ENCODE measurements at regions of chr11 and their contacts with region 1.

Region 1: DNA sequence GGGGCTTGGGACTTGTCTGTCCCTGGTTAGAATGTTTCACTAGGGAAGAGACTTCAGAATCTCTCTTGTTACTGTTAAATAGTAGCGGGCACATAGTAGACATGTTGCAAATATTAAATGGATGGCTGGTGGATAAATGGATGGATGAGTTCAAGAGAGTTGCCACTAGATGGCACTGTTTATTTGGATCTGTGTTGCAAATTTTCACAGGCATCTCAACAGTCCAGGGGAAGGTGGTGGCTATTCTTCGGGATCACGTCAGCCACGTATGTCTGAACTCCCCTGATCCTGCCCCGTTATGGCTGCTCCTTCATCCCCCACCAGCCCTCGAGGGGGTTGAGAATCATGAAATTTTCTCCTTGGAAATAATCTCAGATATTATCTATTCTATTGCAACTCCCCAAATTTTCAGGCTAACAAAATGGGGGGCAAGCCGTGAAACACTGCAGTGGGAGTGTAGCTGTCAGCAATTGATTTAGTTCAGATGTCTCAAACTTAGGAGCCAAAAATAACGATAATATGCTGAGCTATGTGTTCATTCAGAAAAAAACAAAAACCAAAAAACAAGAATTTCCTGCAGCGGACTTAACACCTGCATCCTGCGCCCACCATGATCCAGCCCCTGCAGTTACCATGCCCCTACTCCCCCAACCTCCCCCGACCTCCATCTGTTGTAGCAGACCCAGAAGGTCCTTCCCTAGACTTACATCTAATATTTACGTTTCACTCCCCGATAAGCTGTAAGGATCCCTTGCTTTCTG is 29.1 kb upstream of the BIRC3 start:
- DNase-seq: peak; percentile 80
- H3K4me3 Mint-ChIP-seq: no peak overlapping the region
- H3K27ac Mint-ChIP-seq: no peak overlapping the region
- H3K4me1 Mint-ChIP-seq: peaks cover 19% of the 10 kb centered on the region
- H3K27me3 Mint-ChIP-seq: no peaks in the 10 kb centered on the region
- CTCF ChIP-seq: peak; percentile 63

Region 2: DNA sequence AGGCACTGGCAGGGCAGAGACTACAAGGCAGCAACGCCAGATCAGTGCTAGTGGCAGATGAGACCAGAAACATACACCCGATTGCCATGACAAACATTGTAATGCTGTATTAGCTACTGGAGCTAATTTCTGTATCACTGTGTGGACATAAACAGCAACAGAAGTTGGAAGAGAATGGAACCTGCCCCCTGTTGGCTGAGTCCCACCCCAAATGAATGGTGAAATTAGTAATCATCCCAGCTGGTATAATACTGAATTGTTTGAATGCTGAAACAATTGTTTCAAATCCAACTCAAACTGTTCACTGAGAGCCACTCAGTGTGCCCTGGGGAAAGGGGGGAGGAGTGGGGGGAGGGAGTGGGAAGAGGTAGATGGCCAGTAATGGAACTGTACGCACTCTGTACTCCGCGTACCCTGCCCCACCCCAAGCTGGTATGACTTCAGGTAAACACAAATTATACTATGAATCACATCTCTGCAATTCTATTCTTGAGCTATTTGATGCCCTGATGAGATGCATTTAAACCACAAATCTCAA is 18.0 kb after region 1 on chr11:
- CTCF ChIA-PET with region 1: interaction called, 239 read pairs
- POLR2A ChIA-PET with region 1: interaction called, 69 read pairs
- intact Hi-C with region 1: no loop called
- DNase-seq: peak; percentile 96
- H3K4me3 Mint-ChIP-seq: peak overlapping the region; percentile 50
- H3K27ac Mint-ChIP-seq: peak overlapping the region; percentile 99
- H3K4me1 Mint-ChIP-seq: peaks cover 54% of the 10 kb centered on the region
- H3K27me3 Mint-ChIP-seq: no peaks in the 10 kb centered on the region
- CTCF ChIP-seq: peak; percentile 17

Region 3: DNA sequence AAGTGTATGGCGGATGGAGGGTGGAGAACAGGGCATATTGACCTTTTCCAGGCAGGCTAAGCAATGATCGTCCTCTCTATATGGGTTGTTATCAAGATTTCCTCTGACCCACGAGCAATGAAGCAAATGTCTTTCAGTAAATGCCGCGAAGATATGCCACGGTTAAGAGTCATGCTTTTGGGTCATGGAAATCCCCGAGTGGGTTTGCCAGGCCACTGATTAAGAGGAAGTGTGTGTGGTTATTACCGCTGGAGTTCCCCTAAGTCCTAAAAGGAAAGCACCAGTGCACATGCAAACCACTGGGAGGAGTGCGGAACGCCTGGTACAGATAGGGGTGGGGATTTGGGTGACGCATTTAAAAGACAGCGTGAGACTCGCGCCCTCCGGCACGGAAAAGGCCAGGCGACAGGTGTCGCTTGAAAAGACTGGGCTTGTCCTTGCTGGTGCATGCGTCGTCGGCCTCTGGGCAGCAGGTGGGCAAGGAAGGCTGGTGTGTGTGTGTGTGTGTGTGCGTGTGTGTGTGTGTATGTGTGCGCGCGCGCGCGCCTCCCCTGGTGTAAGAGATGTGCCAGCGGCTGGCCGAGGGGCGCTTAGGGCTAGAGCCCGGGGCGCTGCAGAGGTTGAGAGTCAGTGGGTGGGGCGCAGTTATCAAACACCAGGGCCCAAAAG is 29.1 kb after region 1 on chr11 and contains the start of gene BIRC3:
- CTCF ChIA-PET with region 1: interaction called, 239 read pairs
- POLR2A ChIA-PET with region 1: interaction called, 76 read pairs
- intact Hi-C with region 1: loop called (anchors 1 kb)
- DNase-seq: peak; percentile 96
- H3K4me3 Mint-ChIP-seq: peak within 1 kb of the TSS; percentile 85
- H3K27ac Mint-ChIP-seq: peak within 1 kb of the TSS; percentile 99
- H3K4me1 Mint-ChIP-seq: peaks cover 50% of the 10 kb centered on the region
- H3K27me3 Mint-ChIP-seq: no peaks in the 10 kb centered on the region
- CTCF ChIP-seq: no peak
- total RNA-seq, gene BIRC3: 91.6 and 124 TPM in 2 replicates

Region 4: DNA sequence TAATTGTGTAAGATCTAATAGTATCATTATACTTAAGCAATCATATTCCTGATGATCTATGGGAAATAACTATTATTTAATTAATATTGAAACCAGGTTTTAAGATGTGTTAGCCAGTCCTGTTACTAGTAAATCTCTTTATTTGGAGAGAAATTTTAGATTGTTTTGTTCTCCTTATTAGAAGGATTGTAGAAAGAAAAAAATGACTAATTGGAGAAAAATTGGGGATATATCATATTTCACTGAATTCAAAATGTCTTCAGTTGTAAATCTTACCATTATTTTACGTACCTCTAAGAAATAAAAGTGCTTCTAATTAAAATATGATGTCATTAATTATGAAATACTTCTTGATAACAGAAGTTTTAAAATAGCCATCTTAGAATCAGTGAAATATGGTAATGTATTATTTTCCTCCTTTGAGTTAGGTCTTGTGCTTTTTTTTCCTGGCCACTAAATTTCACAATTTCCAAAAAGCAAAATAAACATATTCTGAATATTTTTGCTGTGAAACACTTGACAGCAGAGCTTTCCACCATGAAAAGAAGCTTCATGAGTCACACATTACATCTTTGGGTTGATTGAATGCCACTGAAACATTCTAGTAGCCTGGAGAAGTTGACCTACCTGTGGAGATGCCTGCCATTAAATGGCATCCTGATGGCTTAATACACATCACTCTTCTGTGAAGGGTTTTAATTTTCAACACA is 35.6 kb after region 1 on chr11:
- CTCF ChIA-PET with region 1: interaction called, 239 read pairs
- POLR2A ChIA-PET with region 1: interaction called, 76 read pairs
- intact Hi-C with region 1: loop called (anchors 1 kb)
- DNase-seq: peak; percentile 61
- H3K4me3 Mint-ChIP-seq: peak overlapping the region; percentile 33
- H3K27ac Mint-ChIP-seq: no peak overlapping the region
- H3K4me1 Mint-ChIP-seq: peaks cover 31% of the 10 kb centered on the region
- H3K27me3 Mint-ChIP-seq: no peaks in the 10 kb centered on the region
- CTCF ChIP-seq: no peak

Region 5: GRCh38 chr11:102346748-102347461 is 58.8 kb after region 1 on chr11 and contains the start of gene BIRC2:
- CTCF ChIA-PET with region 1: interaction called, 101 read pairs
- POLR2A ChIA-PET with region 1: interaction called, 36 read pairs
- intact Hi-C with region 1: loop called (anchors 1 kb)
- DNase-seq: peak; percentile 92
- H3K4me3 Mint-ChIP-seq: peak within 1 kb of the TSS; percentile 79
- H3K27ac Mint-ChIP-seq: peak within 1 kb of the TSS; percentile 97
- H3K4me1 Mint-ChIP-seq: peaks cover 15% of the 10 kb centered on the region
- H3K27me3 Mint-ChIP-seq: no peaks in the 10 kb centered on the region
- CTCF ChIP-seq: peak; percentile 67
- total RNA-seq, gene BIRC2: 46.2 and 50.0 TPM in 2 replicates

Region 6: GRCh38 chr11:102438311-102439062 is 150.3 kb after region 1 on chr11:
- CTCF ChIA-PET with region 1: no interaction called
- POLR2A ChIA-PET with region 1: no interaction called
- intact Hi-C with region 1: no loop called
- DNase-seq: no peak
- H3K4me3 Mint-ChIP-seq: no peak overlapping the region
- H3K27ac Mint-ChIP-seq: no peak overlapping the region
- H3K4me1 Mint-ChIP-seq: no peaks in the 10 kb centered on the region
- H3K27me3 Mint-ChIP-seq: no peaks in the 10 kb centered on the region
- CTCF ChIP-seq: no peak